ENCODE measurements at regions of chr15 and their contacts with region 1.

Region 1: DNA sequence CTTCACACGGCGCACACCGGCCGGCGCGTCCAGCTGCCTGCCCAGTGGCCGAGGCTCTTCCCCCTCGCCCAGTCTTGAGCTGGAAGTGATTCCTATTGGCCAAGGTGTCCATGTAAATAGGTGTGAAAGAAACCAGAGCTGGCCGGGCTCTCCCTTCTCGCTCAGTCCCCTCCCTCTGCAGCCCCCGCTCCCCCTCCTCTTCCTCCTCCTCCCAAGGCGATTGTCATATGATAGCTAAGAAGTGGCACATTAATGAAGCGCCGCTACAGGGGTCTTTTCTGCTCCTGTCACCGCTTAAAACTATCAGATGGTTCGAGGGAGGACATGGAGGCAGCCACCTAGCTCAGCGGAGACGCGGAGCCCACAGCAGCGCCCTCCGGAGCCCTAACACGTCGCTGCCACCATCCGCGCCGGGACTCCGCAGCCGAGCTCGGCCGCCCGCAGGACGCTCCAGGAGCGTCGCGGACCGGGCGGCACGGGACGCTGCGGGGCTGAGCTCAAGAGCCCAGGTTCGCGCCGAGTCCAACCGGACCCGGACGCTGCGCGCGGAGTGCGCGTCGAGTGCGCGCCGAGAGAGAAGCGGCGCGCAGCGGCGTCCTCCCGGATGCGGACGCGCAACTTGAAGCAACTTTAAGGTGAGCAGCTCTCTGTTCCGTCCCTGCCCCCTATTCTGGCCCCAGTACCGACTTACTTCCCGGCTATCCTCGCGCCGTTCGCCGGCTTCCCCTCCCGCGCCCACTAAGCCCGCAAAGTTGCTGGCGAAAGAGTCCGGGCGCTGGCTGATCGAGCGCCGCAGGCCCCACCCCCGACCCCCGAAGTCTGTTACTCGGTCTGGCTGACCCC is at the start of gene FOXB1:
- DNase-seq: peak; percentile 74
- ATAC-seq: peak; percentile 38
- H3K4me3 Mint-ChIP-seq: peak within 1 kb of the TSS; percentile 87
- H3K27ac Mint-ChIP-seq: peak within 1 kb of the TSS; percentile 84
- H3K4me1 Mint-ChIP-seq: peaks cover 42% of the 10 kb centered on the region
- H3K27me3 Mint-ChIP-seq: peaks cover 84% of the 10 kb centered on the region
- total RNA-seq, gene FOXB1: 0.74 to 0.78 TPM

Region 2: DNA sequence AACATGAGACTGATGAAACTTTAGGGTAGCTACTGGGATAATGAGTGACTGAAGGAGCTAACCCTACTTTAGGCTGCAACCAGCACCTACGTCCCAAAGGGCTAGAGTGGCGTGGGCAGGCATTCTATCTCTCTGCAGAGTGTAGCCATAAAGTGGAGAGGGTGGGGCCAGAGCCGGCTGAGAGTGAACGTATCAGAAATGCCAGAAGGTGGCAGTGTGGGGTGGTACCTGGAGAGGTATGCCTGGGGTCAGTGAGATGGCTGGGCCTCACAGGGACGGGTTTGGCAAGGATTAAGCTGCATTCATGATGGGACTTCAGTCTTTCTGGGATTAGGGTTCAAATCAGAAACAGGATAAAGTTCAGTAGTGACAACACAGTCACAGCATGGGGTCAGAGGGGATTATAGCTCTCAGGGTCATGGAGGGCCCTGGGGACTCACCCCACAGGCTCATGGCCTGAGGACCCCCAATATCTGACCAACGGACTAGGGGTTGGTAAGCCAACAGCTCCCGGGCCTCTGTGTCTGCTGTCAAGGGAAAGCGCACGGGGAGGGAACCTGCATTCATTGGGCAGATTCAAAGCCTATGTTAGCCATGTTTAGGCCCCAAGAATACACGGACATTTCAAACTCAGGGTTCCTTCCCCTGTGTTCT is 86.6 kb before region 1 on chr15:
- POLR2A ChIA-PET with region 1: interaction called, 10 read pairs
- DNase-seq: peak; percentile 73
- ATAC-seq: peak; percentile 79
- H3K4me3 Mint-ChIP-seq: no peak overlapping the region
- H3K27ac Mint-ChIP-seq: peak overlapping the region; percentile 82
- H3K4me1 Mint-ChIP-seq: peaks cover 26% of the 10 kb centered on the region
- H3K27me3 Mint-ChIP-seq: peaks cover 15% of the 10 kb centered on the region

Region 3: GRCh38 chr15:59968314-59968713 is 35.9 kb before region 1 on chr15:
- POLR2A ChIA-PET with region 1: no interaction called
- DNase-seq: no peak
- ATAC-seq: no peak
- H3K4me3 Mint-ChIP-seq: no peak overlapping the region
- H3K27ac Mint-ChIP-seq: no peak overlapping the region
- H3K4me1 Mint-ChIP-seq: peaks cover 4% of the 10 kb centered on the region
- H3K27me3 Mint-ChIP-seq: no peaks in the 10 kb centered on the region

Region 4: DNA sequence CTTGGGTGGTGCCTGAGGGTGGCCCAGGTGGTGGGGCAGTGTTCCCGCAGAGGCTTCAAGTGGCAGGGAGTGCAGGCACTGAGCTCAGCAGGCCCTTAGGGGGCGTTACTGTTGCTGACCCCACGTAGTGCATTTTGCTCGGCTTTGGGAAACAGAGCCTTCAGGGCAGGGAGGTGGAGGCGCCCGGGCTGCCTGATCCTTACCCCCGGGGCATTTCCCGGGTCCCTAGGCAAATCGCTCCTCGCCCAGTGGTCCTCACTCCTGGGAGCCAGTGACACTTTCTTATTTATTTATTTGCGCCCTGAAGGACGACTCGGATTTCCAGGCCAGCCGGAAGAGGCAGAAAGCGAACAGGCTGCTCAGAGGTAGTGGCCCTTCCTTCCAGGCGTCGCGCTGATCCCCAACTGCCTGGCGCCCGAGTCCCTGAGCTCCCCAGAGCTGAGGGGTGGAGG is 10.3 kb before region 1 on chr15:
- POLR2A ChIA-PET with region 1: interaction called, 15 read pairs
- DNase-seq: peak; percentile 34
- ATAC-seq: no peak
- H3K4me3 Mint-ChIP-seq: peak overlapping the region; percentile 93
- H3K27ac Mint-ChIP-seq: peak overlapping the region; percentile 15
- H3K4me1 Mint-ChIP-seq: peaks cover 49% of the 10 kb centered on the region
- H3K27me3 Mint-ChIP-seq: peaks cover 90% of the 10 kb centered on the region